ENCODE measurements at regions of chr21 and their contacts with region 1.

Region 1: GRCh38 chr21:24014381-24014780 is 1592.9 kb downstream of the MRPL39 start:
- DNase-seq: no peak
- ATAC-seq: no peak

Region 2: DNA sequence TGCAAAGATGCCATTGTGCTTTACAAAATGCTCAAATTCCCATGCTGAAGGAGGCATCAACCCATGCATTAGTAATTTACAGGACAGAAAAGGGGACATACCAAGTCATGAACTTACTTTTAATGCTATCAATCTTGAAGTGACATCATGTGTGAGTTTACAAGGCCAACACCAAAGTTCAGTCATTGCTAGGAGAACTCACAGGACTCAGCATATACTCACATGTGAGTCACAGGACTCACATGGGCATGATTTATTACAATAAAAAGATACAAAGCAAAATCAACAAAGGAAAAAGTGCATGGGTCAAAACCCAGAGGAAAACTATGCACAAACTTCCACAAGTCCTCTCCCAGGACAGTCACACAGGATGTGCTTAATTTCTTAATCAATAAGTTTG is 63.1 kb before region 1 on chr21:
- intact Hi-C with region 1: loop called in 1 of 2 experiments (anchors 10 kb)
- DNase-seq: no peak
- ATAC-seq: no peak